ENCODE measurements at regions of chr5 and their contacts with region 1.

Region 1: DNA sequence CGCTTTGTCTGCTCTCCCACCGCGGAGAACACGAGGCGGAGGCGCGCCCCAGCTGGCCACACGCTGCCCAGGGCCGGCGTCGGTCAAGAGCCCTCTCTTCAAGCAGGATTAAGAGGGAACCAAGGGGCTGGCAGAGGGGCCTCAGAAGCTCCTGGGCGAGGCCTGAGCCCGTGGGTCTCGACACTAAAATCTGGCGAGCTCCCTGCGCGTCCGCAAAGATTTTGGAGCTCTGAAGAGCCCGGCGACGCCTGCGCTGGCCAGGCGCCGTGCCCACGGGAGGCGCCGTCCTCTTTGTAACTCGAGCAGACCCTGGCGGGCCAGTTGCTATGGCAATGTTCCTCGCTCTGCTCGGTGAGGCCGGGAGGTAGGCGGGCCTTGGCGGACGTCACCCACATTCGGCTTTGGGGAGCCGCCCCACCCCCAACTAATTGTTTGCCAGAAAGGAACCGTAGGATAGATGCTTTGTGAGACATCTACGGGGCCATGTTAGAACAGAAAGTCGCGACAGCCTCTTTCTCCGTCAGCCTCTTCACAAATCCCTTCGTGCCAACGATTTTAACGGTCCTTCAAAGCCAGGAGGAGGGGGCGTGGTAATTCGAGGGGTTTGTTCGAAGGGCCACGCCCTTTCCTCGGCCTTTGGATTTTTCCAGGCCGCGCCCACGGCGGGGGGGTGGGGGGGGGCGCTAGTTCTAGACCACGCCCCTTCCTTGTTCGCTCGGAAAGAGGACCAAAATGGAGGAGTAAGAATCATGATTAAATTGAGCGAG is 714 bp upstream of the CNOT8 start:
- DNase-seq: peak; percentile 96
- H3K27ac ChIP-seq: peak overlapping the region; percentile 100
- CTCF ChIP-seq: no peak

Region 2: GRCh38 chr5:154285622-154286408 is 571.9 kb before region 1 on chr5:
- CTCF ChIA-PET with region 1: interaction called, 11 read pairs
- POLR2A ChIA-PET with region 1: no interaction called
- DNase-seq: peak; percentile 52
- H3K27ac ChIP-seq: peak overlapping the region; percentile 53; the same call in 1 of the 2 replicates
- CTCF ChIP-seq: no peak

Measured in RWPE1 (cell line).